Activated T-helper 1 cell treated with anti-CD3 and anti-CD28 coated beads, Interleukin-12 subunit alpha, Interleukin-12 subunit beta, Interleukin-2, Interleukin-4 antibody, amounts not matched to agents 30 ng/mL and 10 ng/mL and 1 ng/mL, durations not matched to agents 14 hours and 24 hours and 36 hours (primary cell): ENCODE measurements at regions of chr1 and their contacts with region 1.

Region 1: DNA sequence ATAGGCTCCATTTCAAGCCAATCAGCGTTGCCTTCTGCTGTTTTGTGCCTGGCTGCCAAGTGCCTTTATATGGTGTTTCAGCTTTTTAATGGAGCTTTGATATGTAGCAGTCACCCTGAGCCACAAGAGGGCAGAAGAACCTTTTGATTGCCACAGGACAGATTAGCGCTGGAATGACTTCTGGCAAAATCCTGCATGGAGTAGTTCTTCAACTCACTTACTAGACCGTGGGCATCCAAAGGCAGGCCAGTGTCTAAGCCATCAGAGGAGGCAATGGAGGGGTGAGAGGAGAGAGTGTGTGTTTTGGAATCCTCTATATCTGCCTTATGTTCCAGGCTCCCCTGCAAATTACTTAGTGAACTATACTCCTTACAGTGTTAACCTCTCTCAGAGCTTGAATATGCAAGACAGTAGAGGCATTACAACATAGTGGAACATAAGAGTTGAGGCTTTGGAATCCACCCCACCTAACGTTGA is 56.2 kb downstream of the ST3GAL3 start:
- DNase-seq: peak; percentile 25
- H3K4me3 Mint-ChIP-seq: no peak overlapping the region
- H3K27ac Mint-ChIP-seq: no peak overlapping the region
- H3K4me1 Mint-ChIP-seq: peaks cover 5% of the 10 kb centered on the region
- H3K27me3 Mint-ChIP-seq: no peaks in the 10 kb centered on the region

Region 2: GRCh38 chr1:43639976-43640789 is 123.4 kb before region 1 on chr1:
- intact Hi-C with region 1: no loop called
- DNase-seq: no peak
- H3K4me3 Mint-ChIP-seq: no peak overlapping the region
- H3K27ac Mint-ChIP-seq: no peak overlapping the region
- H3K4me1 Mint-ChIP-seq: no peaks in the 10 kb centered on the region
- H3K27me3 Mint-ChIP-seq: peaks cover 4% of the 10 kb centered on the region

Region 3: DNA sequence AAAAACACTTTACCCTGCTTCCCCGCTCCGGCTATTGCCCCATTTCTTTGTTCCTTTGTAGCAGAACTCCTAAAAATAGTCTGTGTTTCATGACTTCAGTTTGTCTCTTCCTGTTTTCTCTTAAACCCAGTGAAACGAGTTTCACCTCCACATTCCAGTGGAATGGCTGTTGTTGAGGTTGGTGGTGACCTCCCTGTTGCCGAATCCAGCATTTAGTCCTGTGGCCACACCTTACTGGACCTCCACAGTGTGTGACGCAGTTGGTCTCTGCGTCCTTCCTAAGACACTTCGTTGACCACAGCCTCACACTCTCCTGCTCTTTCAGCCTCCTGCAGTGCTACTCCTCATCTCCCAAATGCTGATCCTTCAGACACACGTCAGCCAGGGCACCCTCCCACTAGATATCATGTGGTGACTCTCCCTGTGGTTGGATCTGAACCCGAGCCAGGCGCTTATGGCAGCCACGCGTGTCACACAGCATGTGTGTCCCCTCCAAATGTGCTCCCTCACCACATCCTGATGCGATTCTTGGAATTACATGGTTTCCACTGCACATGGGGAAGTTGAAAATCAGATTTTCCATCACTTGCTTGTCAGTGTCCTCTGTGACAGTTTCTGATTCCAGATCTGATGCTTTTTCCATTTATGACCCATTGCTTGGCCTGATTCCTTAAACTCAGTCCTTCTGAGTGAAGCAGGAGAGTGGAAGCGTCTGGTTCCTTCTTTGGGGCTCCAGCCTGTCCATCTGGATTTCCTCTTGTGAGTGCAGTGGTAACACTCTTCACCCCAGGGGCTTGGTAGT is 70.9 kb after region 1 on chr1:
- intact Hi-C with region 1: loop called (anchors 5 kb)
- DNase-seq: no peak
- H3K4me3 Mint-ChIP-seq: no peak overlapping the region
- H3K27ac Mint-ChIP-seq: peak overlapping the region; percentile 40
- H3K4me1 Mint-ChIP-seq: peaks cover 38% of the 10 kb centered on the region
- H3K27me3 Mint-ChIP-seq: no peaks in the 10 kb centered on the region

Region 4: DNA sequence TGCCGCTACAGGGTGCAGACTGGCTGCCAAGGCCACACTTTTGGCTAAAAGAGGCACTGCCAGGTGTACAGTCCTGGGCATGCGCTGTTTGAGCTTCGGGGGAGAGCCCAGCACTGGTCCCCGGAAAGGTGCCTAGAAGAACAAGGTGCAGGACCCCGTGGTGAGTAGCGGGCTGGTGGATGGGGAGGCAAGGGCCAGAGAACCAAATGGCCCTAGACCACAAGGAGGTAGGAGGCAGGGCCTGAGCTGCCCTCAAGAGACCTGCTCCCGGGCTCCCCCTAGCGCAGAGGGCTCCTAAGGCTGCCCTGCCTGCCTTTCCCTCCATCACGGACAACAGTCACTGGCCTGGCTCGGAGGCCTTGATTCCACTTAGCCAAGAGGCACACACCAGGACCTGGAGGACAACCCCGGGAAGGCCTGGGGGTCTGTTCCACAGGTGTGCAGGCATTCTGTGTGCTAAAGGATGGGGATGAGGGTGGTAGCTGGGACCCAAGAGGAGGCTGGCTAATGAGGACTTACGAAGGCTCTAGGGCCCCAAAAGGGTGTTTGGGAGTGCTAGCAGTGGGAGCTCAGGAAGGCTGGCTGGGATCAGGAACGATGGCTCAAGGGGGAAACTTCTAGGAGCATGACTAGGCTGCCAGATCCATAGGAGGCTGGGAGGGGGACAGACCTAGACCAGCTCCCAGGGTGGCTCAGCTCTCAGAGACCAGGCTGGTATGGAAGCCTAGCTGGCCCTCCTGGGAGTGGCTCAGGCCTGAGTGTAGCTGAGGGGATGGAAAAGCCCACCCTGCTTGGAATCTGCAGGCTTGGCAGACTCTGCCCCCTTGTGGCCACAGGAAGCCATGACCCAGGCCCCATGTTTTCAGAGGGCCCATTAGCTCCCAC is 170.8 kb after region 1 on chr1:
- intact Hi-C with region 1: loop called (anchors 1 kb)
- DNase-seq: peak; percentile 32
- H3K4me3 Mint-ChIP-seq: no peak overlapping the region
- H3K27ac Mint-ChIP-seq: no peak overlapping the region
- H3K4me1 Mint-ChIP-seq: peaks cover 8% of the 10 kb centered on the region
- H3K27me3 Mint-ChIP-seq: peaks cover 14% of the 10 kb centered on the region

Region 5: DNA sequence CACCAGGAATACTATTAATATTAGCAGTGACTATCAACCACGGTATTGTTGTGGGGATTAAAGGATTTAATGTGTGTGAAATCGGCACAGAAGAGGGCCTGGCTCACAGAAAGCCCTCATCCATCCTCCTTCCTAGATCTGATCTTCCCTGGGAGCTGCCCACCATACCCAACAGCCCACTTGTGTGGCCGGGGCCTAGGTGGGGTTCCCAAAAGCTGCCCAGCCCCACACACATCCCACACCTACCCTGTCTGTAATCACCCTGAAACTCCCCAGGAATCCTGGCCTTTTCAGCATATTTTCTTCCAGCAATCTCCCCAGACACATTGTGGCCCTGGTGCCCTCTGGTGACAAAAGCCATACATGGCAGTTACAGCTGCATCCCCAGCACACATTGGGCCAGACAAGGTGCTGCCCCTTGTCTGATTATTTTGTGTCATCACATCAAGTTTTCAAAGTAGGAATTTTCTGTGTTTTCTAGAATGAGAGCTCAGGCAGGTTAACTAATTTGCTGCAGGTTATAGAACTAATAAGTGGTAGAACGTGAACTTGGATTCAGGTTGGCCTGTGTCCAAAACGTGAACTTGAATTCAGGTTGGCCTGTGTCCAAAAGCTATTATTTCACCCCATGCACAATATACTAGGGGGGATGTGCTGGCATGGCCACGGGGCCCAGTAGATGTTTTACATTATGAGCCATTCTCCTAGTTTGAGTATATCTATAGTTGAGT is 273.0 kb after region 1 on chr1:
- intact Hi-C with region 1: loop called (anchors 1 kb)
- DNase-seq: peak; percentile 55
- H3K4me3 Mint-ChIP-seq: no peak overlapping the region
- H3K27ac Mint-ChIP-seq: no peak overlapping the region
- H3K4me1 Mint-ChIP-seq: peaks cover 14% of the 10 kb centered on the region
- H3K27me3 Mint-ChIP-seq: peaks cover 10% of the 10 kb centered on the region